Activated CD8-positive, alpha-beta T cell treated with anti-CD3 and anti-CD28 coated beads, Interleukin-2, amount 10 ng/mL, durations not matched to agents 7 days and 5 days (primary cell): ENCODE measurements at regions of chrX and their contacts with region 1.

Region 1: GRCh38 chrX:154397819-154398724 is at the start of gene RPL10:
- DNase-seq: peak; percentile 94
- ATAC-seq: peak; percentile 78
- H3K4me3 Mint-ChIP-seq: peak within 1 kb of the TSS; percentile 90
- H3K27ac Mint-ChIP-seq: peak within 1 kb of the TSS; percentile 100
- H3K4me1 Mint-ChIP-seq: peaks cover 14% of the 10 kb centered on the region
- H3K27me3 Mint-ChIP-seq: no peaks in the 10 kb centered on the region
- total RNA-seq, gene RPL10: 2,758 to 2,862 TPM

Region 2: DNA sequence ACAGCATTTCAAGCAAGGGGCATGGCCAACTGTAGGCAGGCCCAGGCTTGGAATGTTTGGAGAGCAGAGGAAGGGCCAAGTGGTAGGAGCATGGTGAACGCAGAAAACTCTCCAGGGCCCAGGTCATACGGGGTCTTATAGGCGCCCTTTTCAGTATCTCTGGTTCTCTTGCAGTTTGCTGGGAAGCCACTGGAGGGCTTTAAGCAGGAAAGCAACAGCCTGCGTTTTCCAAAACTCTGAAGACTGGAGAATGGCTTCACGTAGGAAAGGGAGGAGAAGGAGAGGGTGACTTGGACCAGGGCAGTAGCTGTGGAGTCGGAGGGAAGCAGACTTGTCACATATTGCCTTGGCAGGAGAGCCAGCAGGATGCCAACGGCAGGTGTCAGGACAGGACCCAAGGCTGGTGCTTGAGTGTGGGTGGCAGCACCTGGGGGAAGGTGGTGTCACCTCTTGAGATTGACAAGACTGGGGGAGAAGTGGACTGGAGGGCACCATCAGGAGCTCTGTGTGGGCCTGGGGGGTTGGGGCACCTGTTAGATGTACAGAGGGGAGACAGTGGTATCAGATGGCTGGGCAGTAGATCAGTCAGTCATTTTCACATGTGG is 80.6 kb before region 1 on chrX:
- CTCF ChIA-PET with region 1: no interaction called
- POLR2A ChIA-PET with region 1: no interaction called
- DNase-seq: no peak
- ATAC-seq: no peak
- H3K4me3 Mint-ChIP-seq: no peak overlapping the region
- H3K27ac Mint-ChIP-seq: no peak overlapping the region
- H3K4me1 Mint-ChIP-seq: peaks cover 46% of the 10 kb centered on the region
- H3K27me3 Mint-ChIP-seq: no peaks in the 10 kb centered on the region

Region 3: GRCh38 chrX:154373340-154374306 is 24.4 kb before region 1 on chrX:
- CTCF ChIA-PET with region 1: interaction called, 6 read pairs
- POLR2A ChIA-PET with region 1: interaction called, 13 read pairs
- DNase-seq: no peak
- ATAC-seq: no peak
- H3K4me3 Mint-ChIP-seq: peak overlapping the region; percentile 72
- H3K27ac Mint-ChIP-seq: peak overlapping the region; percentile 72
- H3K4me1 Mint-ChIP-seq: peaks cover 31% of the 10 kb centered on the region
- H3K27me3 Mint-ChIP-seq: no peaks in the 10 kb centered on the region

Region 4: GRCh38 chrX:154411322-154411980 is 13.4 kb after region 1 on chrX and contains the start of gene TAFAZZIN:
- CTCF ChIA-PET with region 1: interaction called, 5 read pairs
- POLR2A ChIA-PET with region 1: interaction called, 55 read pairs
- DNase-seq: peak; percentile 81
- ATAC-seq: peak; percentile 71
- H3K4me3 Mint-ChIP-seq: peak within 1 kb of the TSS; percentile 93
- H3K27ac Mint-ChIP-seq: peak within 1 kb of the TSS; percentile 95
- H3K4me1 Mint-ChIP-seq: peaks cover 13% of the 10 kb centered on the region
- H3K27me3 Mint-ChIP-seq: no peaks in the 10 kb centered on the region
- total RNA-seq, gene TAFAZZIN: 76.5 to 77.4 TPM

Region 5: DNA sequence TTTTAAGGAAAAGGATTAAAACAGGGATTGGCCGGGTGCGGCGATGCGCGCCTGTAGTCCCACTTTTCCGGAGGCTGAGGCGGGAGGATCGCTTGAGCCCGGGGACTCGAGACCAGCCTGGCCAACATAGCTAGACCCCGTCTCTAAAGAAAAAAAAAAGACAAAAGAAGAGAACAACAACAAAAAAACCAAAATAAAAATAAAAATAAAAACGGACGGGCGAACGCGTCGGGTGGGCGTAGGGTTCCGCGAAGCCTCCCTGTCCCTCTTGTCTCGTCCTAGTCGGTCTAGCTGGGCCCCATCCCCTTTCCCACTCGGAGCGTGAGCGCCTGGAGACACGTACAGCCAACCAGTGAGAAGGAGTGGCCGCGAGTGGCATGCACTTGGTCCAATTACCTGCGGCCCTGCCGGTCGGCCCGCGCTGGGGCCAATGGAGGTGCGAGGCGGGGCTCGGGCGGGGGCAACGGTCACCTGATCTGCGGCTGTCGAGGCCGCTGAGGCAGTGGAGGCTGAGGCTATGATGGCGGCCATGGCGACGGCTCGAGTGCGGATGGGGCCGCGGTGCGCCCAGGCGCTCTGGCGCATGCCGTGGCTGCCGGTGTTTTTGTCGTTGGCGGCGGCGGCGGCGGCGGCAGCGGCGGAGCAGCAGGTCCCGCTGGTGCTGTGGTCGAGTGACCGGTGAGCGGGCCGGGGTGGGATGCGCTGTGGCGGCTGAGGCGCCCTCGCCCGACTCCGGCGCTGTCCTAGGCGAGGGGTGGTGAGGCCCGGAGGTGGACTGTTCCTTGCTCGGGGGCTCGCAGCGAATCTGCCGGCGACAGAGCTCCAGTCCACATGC is 30.3 kb after region 1 on chrX and contains the start of gene ATP6AP1:
- CTCF ChIA-PET with region 1: no interaction called
- POLR2A ChIA-PET with region 1: interaction called, 15 read pairs
- DNase-seq: peak; percentile 92
- ATAC-seq: peak; percentile 99
- H3K4me3 Mint-ChIP-seq: peak within 1 kb of the TSS; percentile 77
- H3K27ac Mint-ChIP-seq: peak within 1 kb of the TSS; percentile 74
- H3K4me1 Mint-ChIP-seq: peaks cover 30% of the 10 kb centered on the region
- H3K27me3 Mint-ChIP-seq: no peaks in the 10 kb centered on the region
- total RNA-seq, gene ATP6AP1: 41.5 to 43.5 TPM